PC-9 (cell line): ENCODE measurements at regions of chr19 and their contacts with region 1.

Region 1: DNA sequence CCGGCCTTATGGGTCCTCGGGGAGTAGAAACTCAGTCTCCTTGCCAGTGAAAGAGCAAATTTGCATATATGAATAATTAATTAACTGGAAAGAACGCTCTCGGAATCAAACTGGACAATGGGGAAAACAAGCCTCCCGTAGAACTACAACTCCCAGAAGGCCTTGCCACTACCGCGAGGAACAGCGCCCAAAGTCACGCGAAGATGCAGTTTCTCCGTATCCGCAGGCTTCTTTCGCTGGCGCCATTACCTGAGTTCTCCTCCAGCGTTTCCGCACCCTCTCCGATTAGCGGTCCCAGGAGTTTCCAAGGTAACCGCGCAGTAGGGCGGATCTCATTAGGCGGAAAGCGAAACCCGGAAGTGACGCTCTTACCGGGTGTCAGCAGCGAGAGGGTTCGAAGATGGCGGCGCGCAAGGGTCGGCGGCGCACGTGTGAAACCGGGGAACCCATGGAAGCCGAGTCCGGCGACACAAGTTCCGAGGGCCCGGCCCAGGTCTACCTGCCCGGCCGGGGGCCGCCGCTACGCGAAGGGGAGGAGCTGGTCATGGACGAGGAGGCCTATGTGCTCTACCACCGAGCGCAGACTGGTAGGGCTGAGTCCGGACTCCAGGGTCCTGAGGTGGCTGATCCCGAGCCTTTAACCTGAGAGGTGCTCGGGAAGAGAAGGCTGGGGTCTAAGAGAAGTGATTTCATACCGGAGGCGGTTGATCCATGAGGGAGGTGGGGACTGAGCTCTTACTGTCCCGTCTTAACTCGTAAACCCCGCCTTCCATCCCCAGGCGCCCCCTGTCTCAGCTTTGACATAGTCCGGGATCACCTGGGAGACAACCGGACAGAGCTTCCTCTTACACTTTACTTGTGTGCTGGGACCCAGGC is at the start of gene GRWD1:
- DNase-seq: peak; percentile 87 to 95
- H3K4me3 ChIP-seq: peak within 1 kb of the TSS; percentile 92
- H3K27ac ChIP-seq: peak within 1 kb of the TSS; percentile 78
- H3K4me1 ChIP-seq: peaks cover 23% of the 10 kb centered on the region; the same call in 1 of the 2 replicates
- H3K27me3 ChIP-seq: no peaks in the 10 kb centered on the region
- CTCF ChIP-seq: peak; percentile 54; the same call in 1 of the 2 replicates
- total RNA-seq, gene GRWD1: 35.5 and 44.2 TPM in 2 replicates

Region 2: GRCh38 chr19:48333467-48334384 is 112.1 kb before region 1 on chr19:
- CTCF ChIA-PET with region 1: no interaction called
- POLR2A ChIA-PET with region 1: no interaction called
- intact Hi-C with region 1: no loop called
- DNase-seq: peak; percentile 87 to 91
- H3K4me3 ChIP-seq: peak overlapping the region; percentile 55
- H3K27ac ChIP-seq: peak overlapping the region; percentile 68
- H3K4me1 ChIP-seq: peaks cover 16% of the 10 kb centered on the region
- H3K27me3 ChIP-seq: no peaks in the 10 kb centered on the region
- CTCF ChIP-seq: peak; percentile 87

Region 3: DNA sequence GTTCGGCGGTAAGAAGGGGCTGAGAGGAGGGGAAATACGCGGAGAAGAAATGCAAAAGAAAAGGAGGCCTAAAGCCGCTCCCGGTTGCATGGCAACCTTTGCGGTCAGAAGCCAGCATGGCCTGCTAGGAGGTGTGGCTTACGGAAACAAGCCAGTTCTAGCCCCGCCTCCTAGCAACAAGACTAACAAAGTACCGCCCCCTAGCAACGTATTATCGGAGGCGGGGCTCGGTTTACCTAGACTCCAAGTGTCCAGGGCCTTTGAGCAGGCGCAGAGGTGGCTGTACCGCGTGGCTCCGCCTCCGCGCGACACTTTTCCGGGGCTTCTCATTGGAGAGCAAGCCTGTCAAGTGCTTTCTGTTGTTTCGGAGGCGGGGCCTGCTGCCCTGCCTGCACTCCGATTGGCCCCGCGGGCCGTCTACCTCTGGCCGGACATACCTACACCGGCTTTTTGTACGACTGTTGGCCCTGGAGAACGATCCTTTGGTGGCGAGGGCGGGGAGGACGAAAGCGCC is 23.0 kb after region 1 on chr19:
- CTCF ChIA-PET with region 1: no interaction called
- POLR2A ChIA-PET with region 1: no interaction called
- intact Hi-C with region 1: loop called (anchors 1 kb)
- DNase-seq: peak; percentile 100
- H3K4me3 ChIP-seq: peak overlapping the region; percentile 93
- H3K27ac ChIP-seq: peak overlapping the region; percentile 82; the same call in 1 of the 2 replicates
- H3K4me1 ChIP-seq: peaks cover 11% of the 10 kb centered on the region
- H3K27me3 ChIP-seq: no peaks in the 10 kb centered on the region
- CTCF ChIP-seq: no peak